Thyroid gland (tissue), 4 donors: ENCODE measurements at regions of chr10 and their contacts with region 1.

Region 1: GRCh38 chr10:12710594-12711349 is 290.7 kb downstream of the CCDC3 start:
- DNase-seq: peak; percentile 72 to 81
- H3K4me3 ChIP-seq: no peak overlapping the region
- H3K27ac ChIP-seq: peak overlapping the region in 1 of 3 donors; percentile 32
- H3K4me1 ChIP-seq: peaks cover 21 to 39% of the 10 kb centered on the region in 2 donors
- H3K27me3 ChIP-seq: no peaks in the 10 kb centered on the region
- CTCF ChIP-seq: peak; percentile 84 to 98 (median 94)
- POLR2A ChIP-seq: no peak

Region 2: DNA sequence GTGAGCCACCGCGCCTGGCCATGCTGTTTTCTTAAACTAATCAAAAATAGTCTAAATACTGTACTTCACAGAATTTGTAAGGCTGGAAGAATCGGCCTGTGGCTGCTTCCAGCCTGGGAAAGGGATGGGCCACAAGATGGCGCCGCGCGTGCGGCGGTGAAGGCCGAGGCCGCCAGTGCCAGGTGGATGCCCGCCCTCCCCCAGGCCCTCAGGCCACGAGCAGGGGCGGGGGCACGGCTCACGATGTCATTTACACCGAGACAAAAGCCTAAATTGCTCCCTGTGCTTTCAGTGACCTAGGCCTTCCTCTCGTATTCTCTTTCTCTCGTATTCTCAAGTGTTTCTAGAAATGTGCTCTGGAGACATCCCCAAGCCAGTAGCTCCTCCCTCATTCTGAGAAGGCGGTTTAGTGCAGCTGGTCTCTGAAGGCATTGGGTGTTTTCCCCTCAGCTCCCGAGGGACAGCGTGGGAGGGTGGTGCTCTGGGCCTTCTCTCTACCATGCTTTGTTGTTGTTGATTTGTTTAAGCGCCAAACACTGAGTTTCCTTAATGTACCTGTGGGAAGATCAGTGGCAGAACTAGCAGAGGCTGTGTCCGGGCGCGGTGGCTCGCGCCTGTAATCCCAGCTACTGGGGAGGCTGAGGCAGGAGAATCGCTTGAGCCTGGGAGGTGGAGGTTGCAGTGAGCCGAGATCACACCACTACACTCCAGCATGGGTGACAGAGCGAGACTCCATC is 446.4 kb before region 1 on chr10:
- intact Hi-C with region 1: loop called (anchors 5 kb)
- DNase-seq: peak; percentile 83
- H3K4me3 ChIP-seq: peak overlapping the region in 1 of 3 donors; percentile 5
- H3K27ac ChIP-seq: peak overlapping the region; percentile 38 to 62 (median 54)
- H3K4me1 ChIP-seq: peaks cover 12 to 14% of the 10 kb centered on the region in 2 donors
- H3K27me3 ChIP-seq: no peaks in the 10 kb centered on the region
- CTCF ChIP-seq: peak; percentile 48 to 91 (median 72)
- POLR2A ChIP-seq: no peak

Region 3: GRCh38 chr10:12902135-12902572 is 191.4 kb after region 1 on chr10:
- intact Hi-C with region 1: loop called (anchors 10 kb)
- DNase-seq: peak; percentile 66 to 69
- H3K4me3 ChIP-seq: no peak overlapping the region
- H3K27ac ChIP-seq: no peak overlapping the region
- H3K4me1 ChIP-seq: no peaks in the 10 kb centered on the region
- H3K27me3 ChIP-seq: no peaks in the 10 kb centered on the region
- CTCF ChIP-seq: peak; percentile 59 to 81 (median 67)
- POLR2A ChIP-seq: no peak

Region 4: GRCh38 chr10:13074561-13075451 is 364.0 kb after region 1 on chr10:
- intact Hi-C with region 1: loop called (anchors 10 kb)
- DNase-seq: peak; percentile 63 to 77
- H3K4me3 ChIP-seq: no peak overlapping the region
- H3K27ac ChIP-seq: no peak overlapping the region
- H3K4me1 ChIP-seq: no peaks in the 10 kb centered on the region
- H3K27me3 ChIP-seq: no peaks in the 10 kb centered on the region
- CTCF ChIP-seq: peak; percentile 50 to 87 (median 66)
- POLR2A ChIP-seq: no peak